Prostate gland (tissue), 2 donors: ENCODE measurements at regions of chr14 and their contacts with region 1.

Region 1: DNA sequence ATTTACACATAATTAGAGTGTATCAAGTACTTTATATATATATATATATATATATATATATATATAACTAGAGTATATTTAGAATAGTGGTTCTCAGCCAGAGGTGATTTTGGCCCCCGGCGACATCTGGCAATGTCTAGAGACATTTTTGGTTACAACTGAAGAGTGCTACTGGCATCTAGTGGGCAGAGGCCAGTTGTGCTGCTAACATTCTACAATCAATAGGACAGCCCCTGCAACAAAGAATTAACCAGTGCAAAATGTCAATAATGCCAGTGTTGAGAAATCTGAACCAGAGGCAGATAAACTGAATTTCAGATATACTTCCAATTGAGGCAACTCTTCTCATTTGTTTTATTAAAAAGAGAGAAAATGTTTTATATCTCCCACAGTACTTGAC is 8.9 kb downstream of the GTF2A1 start:
- DNase-seq: no peak
- H3K4me3 ChIP-seq: no peak overlapping the region
- H3K27ac ChIP-seq: no peak overlapping the region
- H3K4me1 ChIP-seq: no peaks in the 10 kb centered on the region
- H3K27me3 ChIP-seq: no peaks in the 10 kb centered on the region
- CTCF ChIP-seq: peak in 2 of 4 experiments; percentile 30 to 47
- POLR2A ChIP-seq: no peak

Region 2: GRCh38 chr14:80996049-80996901 is 215.6 kb before region 1 on chr14:
- intact Hi-C with region 1: loop called (anchors 5 kb)
- DNase-seq: peak; percentile 42
- H3K4me3 ChIP-seq: no peak overlapping the region
- H3K27ac ChIP-seq: no peak overlapping the region
- H3K4me1 ChIP-seq: no peaks in the 10 kb centered on the region
- H3K27me3 ChIP-seq: no peaks in the 10 kb centered on the region
- CTCF ChIP-seq: peak in 3 of 4 experiments; percentile 48 to 77 (median 75)
- POLR2A ChIP-seq: no peak